ENCODE measurements at regions of chr11 and their contacts with region 1.

Region 1: GRCh38 chr11:12573707-12574485 is 100.3 kb upstream of the TEAD1 start:
- DNase-seq: no peak
- CTCF ChIP-seq: no peak

Region 2: DNA sequence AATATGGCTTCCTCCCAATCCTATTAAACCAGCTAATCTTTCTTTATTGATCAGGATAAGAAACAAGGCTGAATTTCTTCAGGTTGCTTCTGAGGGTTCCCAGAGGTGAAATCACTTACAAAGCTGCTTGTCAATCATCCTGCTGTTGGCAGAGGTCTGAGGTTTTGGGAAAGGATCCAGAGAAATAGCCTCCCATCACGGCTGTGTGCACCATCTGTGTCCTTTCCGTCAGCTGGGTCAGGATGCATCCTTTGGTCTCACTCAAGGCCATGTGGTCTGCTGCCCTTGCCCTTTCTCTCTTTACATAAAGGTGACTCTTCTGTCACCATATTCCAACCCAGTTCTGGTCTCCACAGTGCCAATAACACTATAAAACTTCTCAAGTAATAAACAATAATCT is 13.0 kb before region 1 on chr11:
- CTCF ChIA-PET with region 1: interaction called, 11 read pairs
- POLR2A ChIA-PET with region 1: no interaction called
- DNase-seq: no peak
- CTCF ChIP-seq: no peak

Region 3: GRCh38 chr11:12845739-12846358 is 272.0 kb after region 1 on chr11:
- CTCF ChIA-PET with region 1: no interaction called
- POLR2A ChIA-PET with region 1: no interaction called
- DNase-seq: no peak
- CTCF ChIP-seq: no peak